Esophagus muscularis mucosa (tissue), 4 donors: ENCODE measurements at regions of chr6 and their contacts with region 1.

Region 1: DNA sequence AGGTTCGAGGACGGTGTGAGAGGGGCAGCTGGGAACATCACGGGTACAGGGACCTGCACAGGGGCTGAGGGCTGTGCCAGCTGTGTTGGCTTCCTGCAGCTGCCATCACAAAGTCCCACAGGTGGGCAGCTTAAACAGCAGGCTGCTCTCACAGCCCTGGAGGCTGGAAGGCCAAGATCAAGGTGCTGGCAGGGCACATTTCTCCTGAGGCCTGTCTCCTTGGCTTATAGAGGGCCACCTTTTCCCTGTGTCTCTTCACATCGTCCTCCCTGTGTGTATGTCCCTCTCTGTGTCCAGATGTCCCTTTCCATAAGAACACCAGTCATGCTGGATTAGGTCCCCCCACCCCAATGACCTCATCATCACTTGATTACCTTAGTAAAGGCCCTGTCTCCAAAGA is 15.1 kb upstream of the MPC1 start:
- DNase-seq: no peak
- H3K4me3 ChIP-seq: no peak overlapping the region
- H3K27ac ChIP-seq: no peak overlapping the region
- H3K4me1 ChIP-seq: peaks cover 3 to 8% (median 6%) of the 10 kb centered on the region in 4 donors
- H3K27me3 ChIP-seq: peaks cover 0 to 54% (median 5%) of the 10 kb centered on the region in 4 donors
- CTCF ChIP-seq: no peak
- EP300 ChIP-seq: no peak
- POLR2A ChIP-seq: no peak

Region 2: GRCh38 chr6:166275714-166276166 is 122.1 kb before region 1 on chr6:
- intact Hi-C with region 1: loop called (anchors 2 kb)
- DNase-seq: peak; percentile 88
- H3K4me3 ChIP-seq: no peak overlapping the region
- H3K27ac ChIP-seq: no peak overlapping the region
- H3K4me1 ChIP-seq: peaks cover 0 to 19% (median 14%) of the 10 kb centered on the region in 4 donors
- H3K27me3 ChIP-seq: peaks cover 0 to 30% (median 0%) of the 10 kb centered on the region in 4 donors
- CTCF ChIP-seq: peak in 2 of 3 experiments; percentile 96 to 98
- EP300 ChIP-seq: no peak
- POLR2A ChIP-seq: no peak

Region 3: DNA sequence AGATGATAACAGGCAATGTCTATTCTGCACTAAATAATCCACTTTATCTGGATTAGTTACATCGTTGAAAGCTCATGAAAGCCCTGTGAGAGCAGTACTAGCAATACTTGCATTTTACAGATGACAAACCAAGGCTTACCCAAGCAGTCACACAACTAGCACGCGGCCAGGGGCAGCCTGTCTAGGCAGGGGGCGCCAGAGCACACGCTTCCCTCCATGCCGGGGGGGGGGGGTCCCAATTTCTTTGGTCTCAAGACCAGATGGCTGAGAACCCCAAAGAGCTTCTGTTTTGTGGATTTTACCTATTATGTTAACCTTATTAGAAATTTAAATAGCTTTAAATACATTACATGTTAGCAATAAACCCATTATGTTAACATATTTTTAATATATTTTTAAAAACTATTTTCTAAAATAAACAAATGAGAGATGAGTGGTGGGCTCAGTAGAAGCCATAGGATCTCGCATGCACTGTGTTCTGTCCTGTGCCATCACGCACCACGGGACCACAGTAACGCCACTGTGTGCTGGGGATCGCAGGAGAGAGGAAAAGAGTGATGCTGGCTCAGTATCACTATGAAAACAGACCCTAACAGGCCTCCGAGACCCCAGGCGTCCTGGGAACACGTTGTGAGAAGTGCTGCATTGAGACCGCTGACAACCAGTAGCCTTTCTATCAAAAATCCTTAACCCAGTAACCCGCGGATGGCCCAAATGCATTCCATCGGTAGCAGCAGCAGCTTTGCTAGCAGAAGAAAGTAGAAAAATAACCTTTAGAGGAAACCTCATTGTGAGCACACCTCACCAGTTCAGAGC is 84.4 kb before region 1 on chr6:
- intact Hi-C with region 1: no loop called
- DNase-seq: peak; percentile 77
- H3K4me3 ChIP-seq: no peak overlapping the region
- H3K27ac ChIP-seq: no peak overlapping the region
- H3K4me1 ChIP-seq: peaks cover under 1 to 3% (median 3%) of the 10 kb centered on the region in 4 donors
- H3K27me3 ChIP-seq: peaks cover 0 to 17% (median 3%) of the 10 kb centered on the region in 4 donors
- CTCF ChIP-seq: peak; percentile 51 to 58 (median 56)
- EP300 ChIP-seq: no peak
- POLR2A ChIP-seq: no peak

Region 4: GRCh38 chr6:166333172-166333995 is 64.5 kb before region 1 on chr6:
- intact Hi-C with region 1: no loop called
- DNase-seq: no peak
- H3K4me3 ChIP-seq: no peak overlapping the region
- H3K27ac ChIP-seq: no peak overlapping the region
- H3K4me1 ChIP-seq: peaks cover 10 to 63% (median 52%) of the 10 kb centered on the region in 4 donors
- H3K27me3 ChIP-seq: no peaks in the 10 kb centered on the region
- CTCF ChIP-seq: no peak
- EP300 ChIP-seq: no peak
- POLR2A ChIP-seq: no peak

Region 5: GRCh38 chr6:166627033-166627874 is 229.4 kb after region 1 on chr6 and contains the start of gene RPS6KA2:
- intact Hi-C with region 1: no loop called
- DNase-seq: peak; percentile 100
- H3K4me3 ChIP-seq: peak within 1 kb of the TSS; percentile 84 to 97 (median 94)
- H3K27ac ChIP-seq: peak within 1 kb of the TSS; percentile 85 to 96 (median 90)
- H3K4me1 ChIP-seq: peaks cover 24 to 55% (median 54%) of the 10 kb centered on the region in 4 donors
- H3K27me3 ChIP-seq: no peaks in the 10 kb centered on the region
- CTCF ChIP-seq: no peak
- EP300 ChIP-seq: no peak
- POLR2A ChIP-seq: peak; percentile 85
- total RNA-seq, gene RPS6KA2: 83.9 to 126 (median 112) TPM